IMR-90 (cell line): ENCODE measurements at regions of chr12 and their contacts with region 1.

Region 1: GRCh38 chr12:6965026-6965661 is 5.3 kb downstream of the PHB2 start:
- DNase-seq: peak; percentile 82
- ATAC-seq: peak; percentile 75
- H3K4me3 ChIP-seq: no peak overlapping the region
- H3K27ac ChIP-seq: peak overlapping the region; percentile 33; the same call in 1 of the 2 replicates
- H3K4me1 ChIP-seq: peaks cover 9% of the 10 kb centered on the region
- H3K27me3 ChIP-seq: no peaks in the 10 kb centered on the region
- CTCF ChIP-seq: peak; percentile 91
- POLR2A ChIP-seq: no peak
- RAD21 ChIP-seq: peak; percentile 66

Region 2: DNA sequence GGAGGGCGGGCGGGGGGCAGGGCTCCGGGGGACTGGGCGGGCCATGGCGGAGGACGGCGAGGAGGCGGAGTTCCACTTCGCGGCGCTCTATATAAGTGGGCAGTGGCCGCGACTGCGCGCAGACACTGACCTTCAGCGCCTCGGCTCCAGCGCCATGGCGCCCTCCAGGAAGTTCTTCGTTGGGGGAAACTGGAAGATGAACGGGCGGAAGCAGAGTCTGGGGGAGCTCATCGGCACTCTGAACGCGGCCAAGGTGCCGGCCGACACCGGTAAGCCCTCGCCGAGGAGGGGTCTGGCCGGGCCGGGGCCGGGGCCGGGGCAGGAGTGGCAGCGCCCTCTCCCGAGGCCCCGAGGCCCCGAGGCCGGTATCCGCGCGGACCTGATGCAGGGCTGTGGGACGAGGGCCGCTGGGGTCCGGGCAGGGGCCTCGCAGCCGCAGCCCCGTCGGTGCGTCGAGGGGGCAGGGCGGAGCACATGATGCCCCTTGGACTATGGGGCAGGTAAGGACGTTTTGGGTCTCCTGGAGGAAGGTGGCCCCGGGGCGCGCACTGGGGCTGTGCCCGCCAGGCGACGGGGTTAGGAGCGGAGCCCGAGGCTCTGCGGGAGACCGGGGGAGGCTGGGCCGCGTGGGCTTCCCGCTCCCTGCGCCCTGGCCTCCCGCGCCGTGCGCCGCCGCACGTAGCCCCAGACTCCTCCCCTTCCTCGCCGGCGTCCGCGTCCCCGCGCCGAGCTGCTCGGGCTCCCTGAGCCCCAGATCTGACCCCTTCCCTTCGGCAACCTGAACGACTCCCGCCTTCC is 97.5 kb before region 1 on chr12 and contains the start of gene TPI1:
- CTCF ChIA-PET with region 1: no interaction called
- POLR2A ChIA-PET with region 1: no interaction called
- dilution Hi-C with region 1: no loop called
- in situ Hi-C with region 1: loop called (anchors 5 kb)
- intact Hi-C with region 1: loop called (anchors 1 kb)
- DNase-seq: peak; percentile 74
- ATAC-seq: peak; percentile 82
- H3K4me3 ChIP-seq: peak within 1 kb of the TSS; percentile 87
- H3K27ac ChIP-seq: peak within 1 kb of the TSS; percentile 97
- H3K4me1 ChIP-seq: peaks cover 19% of the 10 kb centered on the region
- H3K27me3 ChIP-seq: no peaks in the 10 kb centered on the region
- CTCF ChIP-seq: no peak
- POLR2A ChIP-seq: peak; percentile 99
- RAD21 ChIP-seq: no peak
- total RNA-seq, gene TPI1: 1,842 and 2,176 TPM in 2 replicates

Region 3: DNA sequence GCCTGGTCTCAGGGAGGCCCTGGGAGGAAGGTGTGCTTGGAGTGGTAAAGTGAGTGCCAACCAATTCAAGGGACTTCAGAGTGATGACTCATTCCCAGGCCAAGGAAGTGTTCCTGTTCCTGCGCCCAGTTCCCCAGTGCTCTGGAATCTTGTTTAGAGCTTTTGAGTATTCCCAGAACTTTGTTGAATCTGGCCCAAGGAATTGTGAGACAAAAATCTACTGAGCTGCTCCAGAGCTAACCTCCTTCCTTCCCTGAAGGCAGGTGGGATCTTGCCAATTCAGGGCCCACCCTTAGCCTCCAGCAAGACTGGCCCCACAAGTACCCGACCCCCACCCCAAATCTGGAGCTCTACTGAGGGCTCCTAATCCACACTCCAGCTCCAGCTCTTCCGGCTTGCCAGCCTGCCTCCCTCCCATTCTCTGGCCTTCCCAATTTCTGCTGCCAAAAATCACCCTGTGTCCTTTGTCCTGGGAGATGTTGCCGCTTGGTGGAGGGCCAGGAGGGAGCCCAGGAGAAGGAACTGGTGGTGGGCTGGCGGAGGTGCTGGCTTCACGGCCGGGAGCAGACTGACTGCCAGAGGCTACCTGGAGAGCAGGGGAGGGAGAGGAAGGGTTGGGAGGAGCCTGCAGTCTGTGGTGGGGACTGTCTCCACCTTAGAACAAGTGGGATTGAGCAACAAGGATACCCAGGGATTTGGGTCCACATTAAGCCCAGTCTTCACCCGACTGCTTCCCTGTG is 39.4 kb before region 1 on chr12:
- CTCF ChIA-PET with region 1: interaction called, 3 read pairs
- POLR2A ChIA-PET with region 1: interaction called, 3 read pairs
- dilution Hi-C with region 1: no loop called
- in situ Hi-C with region 1: no loop called
- intact Hi-C with region 1: loop called (anchors 1 kb)
- DNase-seq: peak; percentile 90
- ATAC-seq: peak; percentile 28
- H3K4me3 ChIP-seq: peak overlapping the region; percentile 25
- H3K27ac ChIP-seq: peak overlapping the region; percentile 93
- H3K4me1 ChIP-seq: peaks cover 25% of the 10 kb centered on the region
- H3K27me3 ChIP-seq: no peaks in the 10 kb centered on the region
- CTCF ChIP-seq: no peak
- POLR2A ChIP-seq: no peak
- RAD21 ChIP-seq: no peak

Region 4: GRCh38 chr12:6944381-6945186 is 20.6 kb before region 1 on chr12:
- CTCF ChIA-PET with region 1: interaction called, 3 read pairs
- POLR2A ChIA-PET with region 1: no interaction called
- dilution Hi-C with region 1: no loop called
- in situ Hi-C with region 1: no loop called
- intact Hi-C with region 1: loop called (anchors 1 kb)
- DNase-seq: peak; percentile 92
- ATAC-seq: peak; percentile 76
- H3K4me3 ChIP-seq: peak overlapping the region; percentile 73
- H3K27ac ChIP-seq: peak overlapping the region; percentile 90
- H3K4me1 ChIP-seq: peaks cover 5% of the 10 kb centered on the region; the same call in 1 of the 2 replicates
- H3K27me3 ChIP-seq: no peaks in the 10 kb centered on the region
- CTCF ChIP-seq: peak; percentile 94
- POLR2A ChIP-seq: no peak
- RAD21 ChIP-seq: peak; percentile 75

Region 5: GRCh38 chr12:7018350-7019042 is 53.4 kb after region 1 on chr12 and contains the start of gene LPCAT3:
- CTCF ChIA-PET with region 1: interaction called, 3 read pairs
- POLR2A ChIA-PET with region 1: no interaction called
- dilution Hi-C with region 1: no loop called
- in situ Hi-C with region 1: no loop called
- intact Hi-C with region 1: loop called (anchors 2 kb)
- DNase-seq: peak; percentile 90
- ATAC-seq: peak; percentile 95
- H3K4me3 ChIP-seq: peak within 1 kb of the TSS; percentile 90
- H3K27ac ChIP-seq: peak within 1 kb of the TSS; percentile 79
- H3K4me1 ChIP-seq: peaks cover 5% of the 10 kb centered on the region; the same call in 1 of the 2 replicates
- H3K27me3 ChIP-seq: no peaks in the 10 kb centered on the region
- CTCF ChIP-seq: peak; percentile 94
- POLR2A ChIP-seq: no peak
- RAD21 ChIP-seq: peak; percentile 57
- total RNA-seq, gene LPCAT3: 6.4 and 7.0 TPM in 2 replicates

Region 6: DNA sequence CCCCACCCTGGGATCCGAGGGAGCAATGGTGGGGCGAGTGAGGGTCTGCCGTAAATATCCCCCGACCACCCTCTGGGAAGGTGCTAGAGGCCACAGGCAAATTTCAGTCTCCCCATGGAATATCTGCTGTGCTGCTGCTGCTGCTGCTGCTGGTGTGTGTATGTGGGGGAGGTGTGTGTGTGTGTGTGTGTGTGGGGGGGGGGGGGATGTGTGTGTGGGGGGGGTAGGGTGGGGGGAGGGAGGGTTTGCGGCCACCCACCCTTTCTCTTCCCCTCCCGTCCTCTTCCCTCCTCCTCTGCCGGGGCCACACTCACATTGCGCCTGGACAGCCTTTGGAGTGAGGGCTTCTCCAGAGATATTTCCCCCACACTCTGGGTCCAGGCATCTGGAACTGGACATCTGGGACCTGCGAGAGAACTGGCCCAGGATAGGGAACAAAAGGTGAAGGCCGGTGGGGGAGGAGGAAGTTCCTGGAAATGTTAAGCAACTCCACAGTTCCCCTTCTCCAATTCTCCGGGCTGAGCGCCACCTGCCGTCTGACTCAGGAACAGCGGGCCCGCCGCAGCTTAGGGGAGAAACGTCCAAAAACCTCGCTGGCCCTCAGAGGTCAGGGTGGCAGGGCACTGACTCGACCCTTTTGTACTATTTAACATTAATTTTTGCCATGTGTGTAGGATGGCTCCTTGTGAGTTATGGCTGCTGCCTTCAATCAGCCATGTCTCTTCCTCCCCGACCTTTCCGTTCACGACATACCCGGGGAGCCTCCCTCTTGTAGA is 143.8 kb after region 1 on chr12 and contains the start of gene C1RL:
- CTCF ChIA-PET with region 1: interaction called, 3 read pairs
- POLR2A ChIA-PET with region 1: no interaction called
- dilution Hi-C with region 1: no loop called
- in situ Hi-C with region 1: no loop called
- intact Hi-C with region 1: loop called (anchors 1 kb)
- DNase-seq: peak; percentile 77
- ATAC-seq: peak; percentile 58
- H3K4me3 ChIP-seq: peak within 1 kb of the TSS; percentile 66
- H3K27ac ChIP-seq: peak within 1 kb of the TSS; percentile 97
- H3K4me1 ChIP-seq: peaks cover 5% of the 10 kb centered on the region; the same call in 1 of the 2 replicates
- H3K27me3 ChIP-seq: no peaks in the 10 kb centered on the region
- CTCF ChIP-seq: peak; percentile 93
- POLR2A ChIP-seq: peak; percentile 15; the same call in 1 of the 2 replicates
- RAD21 ChIP-seq: peak; percentile 79
- total RNA-seq, gene C1RL: 7.5 and 9.1 TPM in 2 replicates

Region 7: DNA sequence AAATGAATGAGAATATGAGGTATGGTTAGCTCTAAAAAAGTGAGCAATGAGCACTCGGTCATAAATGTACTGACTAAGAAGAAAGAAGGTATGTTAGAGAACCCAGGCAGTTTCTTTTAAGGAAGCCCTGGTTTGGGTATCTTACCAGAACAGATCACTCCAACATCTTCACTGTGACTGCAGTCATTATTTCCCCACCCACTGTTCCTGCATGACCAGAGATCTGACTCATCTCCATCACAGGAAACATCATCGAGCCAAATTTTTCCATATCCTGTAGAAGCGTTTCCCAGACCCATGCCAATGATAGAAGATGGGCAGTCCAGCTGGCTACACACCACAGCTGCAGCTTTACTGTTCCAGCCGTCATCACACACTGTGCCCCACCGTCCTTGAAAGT is 430.8 kb after region 1 on chr12:
- CTCF ChIA-PET with region 1: no interaction called
- POLR2A ChIA-PET with region 1: no interaction called
- dilution Hi-C with region 1: no loop called
- in situ Hi-C with region 1: no loop called
- intact Hi-C with region 1: no loop called
- DNase-seq: peak; percentile 6
- ATAC-seq: no peak
- H3K4me3 ChIP-seq: no peak overlapping the region
- H3K27ac ChIP-seq: no peak overlapping the region
- H3K4me1 ChIP-seq: no peaks in the 10 kb centered on the region
- H3K27me3 ChIP-seq: no peaks in the 10 kb centered on the region
- CTCF ChIP-seq: no peak
- POLR2A ChIP-seq: no peak
- RAD21 ChIP-seq: no peak